GM23248 (cell line): ENCODE measurements at regions of chr9 and their contacts with region 1.

Region 1: DNA sequence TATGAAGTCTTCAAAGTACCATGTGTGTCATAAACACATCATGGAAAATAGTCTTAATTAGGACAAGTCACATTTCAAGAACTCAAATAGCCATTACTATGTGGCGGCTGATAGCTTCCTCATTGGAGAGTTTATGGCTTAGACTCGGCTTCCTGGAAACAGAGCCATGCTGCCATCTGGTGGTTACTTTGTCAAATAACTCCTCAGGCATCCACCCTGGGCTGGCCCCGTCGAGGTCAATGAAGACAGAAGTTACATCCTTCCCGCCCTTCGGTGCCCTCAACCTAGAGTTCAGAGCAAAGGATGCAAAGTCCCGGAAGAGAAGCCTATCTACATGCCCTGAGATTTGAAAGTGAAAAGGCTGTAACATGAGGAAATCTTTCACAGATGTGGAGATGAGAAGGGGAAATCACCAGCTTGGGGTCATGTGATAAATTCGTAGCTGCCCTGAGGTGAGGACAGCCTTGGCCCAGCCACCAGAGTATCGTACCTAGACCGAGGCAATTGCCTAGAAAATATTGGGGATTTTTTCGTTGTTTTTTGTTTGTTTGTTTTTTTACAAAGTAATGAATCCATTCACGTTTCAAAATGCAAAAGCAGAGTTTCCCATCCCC is 45.5 kb upstream of the ZNF169 start:
- DNase-seq: peak; percentile 82
- H3K4me3 ChIP-seq: no peak overlapping the region
- H3K27ac ChIP-seq: no peak overlapping the region
- H3K4me1 ChIP-seq: no peaks in the 10 kb centered on the region; the same call in 1 of the 2 replicates
- H3K27me3 ChIP-seq: no peaks in the 10 kb centered on the region; the same call in 1 of the 2 replicates

Region 2: GRCh38 chr9:92846662-92847145 is 1366.9 kb before region 1 on chr9:
- in situ Hi-C with region 1: no loop called
- DNase-seq: peak; percentile 1
- H3K4me3 ChIP-seq: no peak overlapping the region
- H3K27ac ChIP-seq: no peak overlapping the region
- H3K4me1 ChIP-seq: no peaks in the 10 kb centered on the region
- H3K27me3 ChIP-seq: no peaks in the 10 kb centered on the region

Region 3: DNA sequence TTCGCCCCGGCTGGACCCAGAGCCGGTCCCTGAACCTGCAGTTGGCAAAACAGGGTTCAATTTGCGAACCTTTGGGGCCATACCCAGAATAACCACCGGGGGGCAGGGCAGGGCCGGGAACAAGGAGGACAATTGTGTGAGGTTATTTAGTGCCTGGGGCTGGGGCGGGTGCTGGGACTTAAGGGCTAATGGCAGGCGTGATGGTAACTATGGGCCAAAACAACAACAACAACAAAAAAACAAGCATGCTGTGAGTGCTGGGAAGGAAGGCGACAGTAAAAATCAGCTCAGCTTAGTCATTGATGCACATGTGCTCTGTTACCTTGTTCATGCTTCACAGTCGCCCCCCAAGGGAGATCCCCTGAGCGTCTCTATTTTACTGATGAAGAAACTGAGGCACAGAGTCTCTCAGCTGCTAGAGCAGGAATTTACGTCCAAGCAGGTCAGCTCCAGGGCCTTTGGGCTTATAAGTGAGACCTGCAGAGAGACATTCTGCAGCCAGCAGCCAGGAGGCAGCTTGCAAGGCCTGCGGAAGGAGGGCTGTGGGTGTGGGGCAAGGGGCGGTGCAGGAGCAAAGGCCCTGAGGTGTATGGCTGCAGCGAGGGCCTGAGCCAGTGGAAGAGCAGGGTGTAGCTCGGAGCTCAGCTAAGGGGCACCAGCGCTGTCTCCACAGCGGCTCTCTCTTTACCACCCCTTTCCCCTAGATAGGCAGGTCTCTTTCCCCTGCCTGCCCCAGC is 531.2 kb before region 1 on chr9:
- in situ Hi-C with region 1: loop called (anchors 25 kb)
- DNase-seq: peak; percentile 71
- H3K4me3 ChIP-seq: no peak overlapping the region
- H3K27ac ChIP-seq: no peak overlapping the region
- H3K4me1 ChIP-seq: no peaks in the 10 kb centered on the region
- H3K27me3 ChIP-seq: no peaks in the 10 kb centered on the region

Region 4: GRCh38 chr9:93827545-93828330 is 385.9 kb before region 1 on chr9:
- in situ Hi-C with region 1: loop called (anchors 25 kb)
- DNase-seq: peak; percentile 67
- H3K4me3 ChIP-seq: peak overlapping the region; percentile 55
- H3K27ac ChIP-seq: no peak overlapping the region
- H3K4me1 ChIP-seq: no peaks in the 10 kb centered on the region
- H3K27me3 ChIP-seq: no peaks in the 10 kb centered on the region

Region 5: GRCh38 chr9:94014065-94014654 is 199.5 kb before region 1 on chr9:
- in situ Hi-C with region 1: loop called (anchors 10 kb)
- DNase-seq: peak; percentile 67
- H3K4me3 ChIP-seq: no peak overlapping the region
- H3K27ac ChIP-seq: no peak overlapping the region
- H3K4me1 ChIP-seq: no peaks in the 10 kb centered on the region; the same call in 1 of the 2 replicates
- H3K27me3 ChIP-seq: no peaks in the 10 kb centered on the region